Transverse colon (tissue), 4 donors: ENCODE measurements at regions of chr11 and their contacts with region 1.

Region 1: GRCh38 chr11:123707606-123708205 is 33.8 kb downstream of the ZNF202 start:
- DNase-seq: peak; percentile 58
- H3K4me3 ChIP-seq: no peak overlapping the region
- H3K27ac ChIP-seq: no peak overlapping the region
- H3K4me1 ChIP-seq: no peaks in the 10 kb centered on the region
- H3K27me3 ChIP-seq: peaks cover 5% of the 10 kb centered on the region
- CTCF ChIP-seq: peak; percentile 45 to 63 (median 56)
- EP300 ChIP-seq: no peak
- POLR2A ChIP-seq: no peak

Region 2: DNA sequence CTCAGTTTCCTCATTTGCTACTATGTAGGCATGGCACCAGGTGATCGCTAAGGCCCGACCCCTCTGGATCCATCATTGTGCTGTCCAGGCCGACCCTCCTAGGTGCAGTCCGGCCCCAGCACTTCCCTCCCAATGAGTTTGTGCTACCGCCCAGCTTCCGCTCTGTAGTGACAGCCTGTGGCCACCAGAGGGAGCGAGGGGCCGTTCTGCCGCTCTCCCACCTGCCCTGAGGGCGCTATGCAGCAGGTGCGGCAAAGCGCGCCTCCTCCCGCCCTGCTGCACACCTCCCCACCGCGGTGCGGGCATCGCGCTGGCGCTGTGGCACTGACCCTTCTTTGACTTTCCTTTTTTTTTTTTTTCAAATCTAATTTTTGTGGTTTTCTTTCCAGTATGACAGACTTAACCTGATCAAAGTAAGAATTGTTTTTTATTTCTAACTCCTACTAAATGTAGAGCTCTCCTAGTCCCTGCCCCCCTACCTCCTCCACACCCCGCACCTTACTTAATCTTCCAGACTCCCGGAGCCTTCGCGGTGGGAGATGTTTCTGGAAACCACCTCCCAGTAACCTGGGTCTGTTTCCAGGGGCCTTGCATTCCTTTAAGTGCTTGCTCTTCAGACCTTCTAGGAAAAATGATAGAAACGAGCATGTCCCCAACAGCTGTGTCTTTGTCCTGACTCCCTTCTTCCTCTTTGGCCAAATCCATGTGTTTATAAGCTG is 127.0 kb before region 1 on chr11:
- in situ Hi-C with region 1: loop called in 1 of 4 experiments (anchors 10 kb)
- intact Hi-C with region 1: loop called (anchors 1 kb)
- DNase-seq: peak; percentile 73
- H3K4me3 ChIP-seq: no peak overlapping the region
- H3K27ac ChIP-seq: no peak overlapping the region
- H3K4me1 ChIP-seq: peaks cover 0 to 12% (median 6%) of the 10 kb centered on the region in 4 donors
- H3K27me3 ChIP-seq: peaks cover 3% of the 10 kb centered on the region
- CTCF ChIP-seq: peak; percentile 88 to 95 (median 92)
- EP300 ChIP-seq: no peak
- POLR2A ChIP-seq: no peak

Region 3: DNA sequence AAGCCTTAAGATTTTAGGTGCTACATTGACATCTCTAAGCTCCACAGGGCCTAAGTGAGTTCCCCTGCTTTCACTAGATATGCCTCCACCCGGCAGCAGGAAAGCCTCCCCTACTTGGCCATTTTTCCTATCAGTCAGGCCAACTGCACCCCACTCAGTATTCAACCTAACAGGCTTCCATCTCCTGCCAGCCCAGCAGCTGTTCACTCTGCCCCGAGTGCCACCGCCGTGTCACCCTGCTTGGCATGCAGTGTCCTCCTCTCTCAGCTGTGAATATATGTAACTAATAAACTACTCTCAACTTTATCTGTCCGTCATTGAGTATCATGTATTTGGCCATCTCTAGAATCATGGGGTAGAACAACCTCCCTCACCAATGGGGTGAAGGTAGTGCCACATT is 107.4 kb after region 1 on chr11:
- in situ Hi-C with region 1: no loop called
- intact Hi-C with region 1: no loop called
- DNase-seq: no peak
- H3K4me3 ChIP-seq: no peak overlapping the region
- H3K27ac ChIP-seq: no peak overlapping the region
- H3K4me1 ChIP-seq: no peaks in the 10 kb centered on the region
- H3K27me3 ChIP-seq: no peaks in the 10 kb centered on the region
- CTCF ChIP-seq: no peak
- EP300 ChIP-seq: no peak
- POLR2A ChIP-seq: no peak

Region 4: DNA sequence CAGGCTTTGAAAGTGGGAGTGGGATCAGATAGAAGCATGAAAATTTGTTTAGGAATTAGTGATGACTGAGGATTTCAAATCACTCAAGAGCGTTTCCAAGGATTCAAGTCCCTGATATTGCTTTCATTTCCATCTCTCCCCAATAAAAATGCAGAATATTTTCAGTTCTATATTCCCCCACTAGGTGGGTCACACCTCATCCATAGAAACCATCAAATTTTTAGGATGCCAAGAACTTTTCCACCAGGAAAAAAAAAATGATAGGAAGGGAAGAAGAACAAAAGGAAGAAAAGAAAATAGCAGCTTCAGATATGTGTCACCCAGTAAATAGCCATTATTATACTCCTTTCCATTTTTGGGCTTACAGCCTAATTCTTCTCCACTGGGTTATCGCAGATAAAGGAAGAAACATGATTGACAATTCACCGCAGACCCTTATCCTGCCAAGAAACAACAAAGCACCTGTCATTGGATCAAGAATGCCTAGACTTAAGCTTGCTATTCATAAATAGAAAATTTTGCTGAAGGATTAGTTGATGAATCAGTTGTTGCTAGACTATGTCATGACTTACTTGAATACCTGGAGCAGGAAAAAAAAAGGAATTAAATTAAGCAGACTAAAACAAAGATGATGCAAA is 445.2 kb after region 1 on chr11:
- in situ Hi-C with region 1: no loop called
- intact Hi-C with region 1: no loop called
- DNase-seq: no peak
- H3K4me3 ChIP-seq: no peak overlapping the region
- H3K27ac ChIP-seq: no peak overlapping the region
- H3K4me1 ChIP-seq: no peaks in the 10 kb centered on the region
- H3K27me3 ChIP-seq: no peaks in the 10 kb centered on the region
- CTCF ChIP-seq: no peak
- EP300 ChIP-seq: no peak
- POLR2A ChIP-seq: no peak